Activated CD4-positive, alpha-beta T cell treated with anti-CD3 and anti-CD28 coated beads for 36 hours (primary cell): ENCODE measurements at regions of chr3 and their contacts with region 1.

Region 1: GRCh38 chr3:102715030-102715697 is 280.3 kb downstream of the ZPLD1 start:
- DNase-seq: no peak
- ATAC-seq: peak; percentile 82
- H3K4me3 Mint-ChIP-seq: no peak overlapping the region
- H3K27ac Mint-ChIP-seq: no peak overlapping the region
- H3K4me1 Mint-ChIP-seq: peaks cover 8% of the 10 kb centered on the region
- H3K27me3 Mint-ChIP-seq: peaks cover 8% of the 10 kb centered on the region

Region 2: GRCh38 chr3:101809178-101810021 is 905.8 kb before region 1 on chr3:
- CTCF ChIA-PET with region 1: no interaction called
- POLR2A ChIA-PET with region 1: no interaction called
- intact Hi-C with region 1: loop called in 1 of 2 experiments (anchors 10 kb)
- DNase-seq: peak; percentile 45
- ATAC-seq: peak; percentile 53
- H3K4me3 Mint-ChIP-seq: no peak overlapping the region
- H3K27ac Mint-ChIP-seq: peak overlapping the region; percentile 53
- H3K4me1 Mint-ChIP-seq: peaks cover 48% of the 10 kb centered on the region
- H3K27me3 Mint-ChIP-seq: no peaks in the 10 kb centered on the region

Region 3: GRCh38 chr3:103158183-103158582 is 443.0 kb after region 1 on chr3:
- CTCF ChIA-PET with region 1: no interaction called
- POLR2A ChIA-PET with region 1: no interaction called
- intact Hi-C with region 1: no loop called
- DNase-seq: no peak
- ATAC-seq: no peak
- H3K4me3 Mint-ChIP-seq: no peak overlapping the region
- H3K27ac Mint-ChIP-seq: no peak overlapping the region
- H3K4me1 Mint-ChIP-seq: no peaks in the 10 kb centered on the region
- H3K27me3 Mint-ChIP-seq: no peaks in the 10 kb centered on the region